ENCODE measurements at regions of chr2 and their contacts with region 1.

Region 1: DNA sequence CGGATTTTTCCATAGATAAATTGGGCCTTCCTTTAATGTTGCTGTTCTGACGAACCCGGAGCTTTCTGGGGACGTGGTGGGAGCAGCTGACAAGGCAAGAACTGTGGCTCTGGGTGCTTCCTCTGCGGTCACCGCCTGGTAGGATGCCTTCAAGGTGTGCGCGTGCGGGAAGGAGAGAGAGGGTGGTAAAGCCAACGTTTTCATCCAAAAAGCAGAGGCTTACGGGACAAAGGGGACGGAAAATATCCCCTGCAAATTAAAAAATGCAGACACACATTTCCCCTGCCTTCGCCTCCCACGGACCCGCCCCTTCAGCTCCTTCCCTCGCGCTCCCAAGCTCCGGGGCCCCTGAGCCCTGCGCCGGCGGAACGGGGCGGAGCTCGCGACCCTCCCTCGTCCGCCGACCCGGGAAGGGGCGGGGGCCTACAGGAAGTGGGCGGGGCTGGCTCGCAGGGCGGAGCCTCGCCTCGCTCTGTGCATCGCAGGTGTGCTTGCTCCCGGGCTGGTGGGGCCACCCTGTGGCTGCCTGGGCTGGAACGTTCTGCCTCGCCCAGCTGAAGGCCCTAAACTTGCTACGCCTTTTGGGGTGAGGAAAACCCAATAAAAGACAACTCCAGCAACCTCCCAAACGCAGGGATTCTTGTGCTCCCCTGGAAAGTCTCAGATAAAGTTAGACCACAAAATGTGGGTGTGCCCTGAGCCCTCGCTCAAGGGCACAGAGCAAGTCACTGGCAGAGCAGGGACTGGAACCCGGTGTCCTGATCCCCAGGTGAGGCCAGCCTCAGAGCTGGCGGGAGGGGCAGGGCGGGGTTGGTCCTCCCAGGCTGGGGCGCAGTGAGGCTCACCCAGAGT is 25.4 kb upstream of the SLC66A3 start:
- DNase-seq: peak; percentile 59 to 74
- ATAC-seq: peak; percentile 66 to 81
- H3K4me3 ChIP-seq: peak overlapping the region; percentile 45
- H3K27ac ChIP-seq: peak overlapping the region; percentile 67 to 77
- H3K4me1 ChIP-seq: peaks cover 16% of the 10 kb centered on the region; the same call in 2 of the 3 replicates
- CTCF ChIP-seq: peak; percentile 72
- EP300 ChIP-seq: no peak
- POLR2A ChIP-seq: no peak
- RAD21 ChIP-seq: peak; percentile 74 to 86

Region 2: GRCh38 chr2:10647886-10648605 is 481.8 kb before region 1 on chr2:
- CTCF ChIA-PET with region 1: no interaction called
- POLR2A ChIA-PET with region 1: no interaction called
- DNase-seq: no peak
- ATAC-seq: peak in 1 of 2 experiments; percentile 30; a peak in 2 of 6 replicates
- H3K4me3 ChIP-seq: no peak overlapping the region
- H3K27ac ChIP-seq: no peak overlapping the region
- H3K4me1 ChIP-seq: no peaks in the 10 kb centered on the region
- CTCF ChIP-seq: no peak
- EP300 ChIP-seq: no peak
- POLR2A ChIP-seq: no peak
- RAD21 ChIP-seq: no peak

Region 3: GRCh38 chr2:10844097-10844496 is 285.7 kb before region 1 on chr2:
- CTCF ChIA-PET with region 1: interaction called, 1,025 read pairs
- POLR2A ChIA-PET with region 1: no interaction called
- DNase-seq: peak in 1 of 2 experiments; percentile 52
- ATAC-seq: peak; percentile 70 to 93; a peak in 5 of 6 replicates
- H3K4me3 ChIP-seq: no peak overlapping the region
- H3K27ac ChIP-seq: no peak overlapping the region; a peak in 1 of 6 replicates
- H3K4me1 ChIP-seq: peaks cover 9% of the 10 kb centered on the region; the same call in 1 of the 3 replicates
- CTCF ChIP-seq: no peak
- EP300 ChIP-seq: no peak
- POLR2A ChIP-seq: no peak
- RAD21 ChIP-seq: no peak

Region 4: DNA sequence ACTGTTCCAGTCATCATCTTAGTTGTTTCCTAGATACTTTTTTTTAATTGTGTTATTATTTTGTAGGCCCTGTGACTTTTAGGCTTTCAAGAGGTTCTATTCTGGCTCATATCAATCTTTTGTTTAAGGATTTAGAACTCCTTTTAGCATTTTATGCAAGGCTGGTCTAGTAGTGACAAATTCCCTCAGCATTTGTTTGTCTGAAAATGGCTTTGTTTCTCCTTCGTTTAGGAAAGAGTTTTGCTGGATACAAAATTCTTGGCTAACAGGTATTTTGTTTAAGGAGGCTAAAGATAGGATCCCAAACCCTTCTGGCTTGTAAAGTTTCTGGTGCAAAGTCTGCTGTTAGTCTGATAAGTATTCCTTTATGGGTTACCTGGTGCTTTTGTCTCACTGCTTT is 91.2 kb before region 1 on chr2:
- CTCF ChIA-PET with region 1: no interaction called
- POLR2A ChIA-PET with region 1: no interaction called
- DNase-seq: no peak
- ATAC-seq: no peak
- H3K4me3 ChIP-seq: no peak overlapping the region
- H3K27ac ChIP-seq: no peak overlapping the region
- H3K4me1 ChIP-seq: no peaks in the 10 kb centered on the region
- CTCF ChIP-seq: no peak
- EP300 ChIP-seq: no peak
- POLR2A ChIP-seq: no peak
- RAD21 ChIP-seq: no peak

Region 5: DNA sequence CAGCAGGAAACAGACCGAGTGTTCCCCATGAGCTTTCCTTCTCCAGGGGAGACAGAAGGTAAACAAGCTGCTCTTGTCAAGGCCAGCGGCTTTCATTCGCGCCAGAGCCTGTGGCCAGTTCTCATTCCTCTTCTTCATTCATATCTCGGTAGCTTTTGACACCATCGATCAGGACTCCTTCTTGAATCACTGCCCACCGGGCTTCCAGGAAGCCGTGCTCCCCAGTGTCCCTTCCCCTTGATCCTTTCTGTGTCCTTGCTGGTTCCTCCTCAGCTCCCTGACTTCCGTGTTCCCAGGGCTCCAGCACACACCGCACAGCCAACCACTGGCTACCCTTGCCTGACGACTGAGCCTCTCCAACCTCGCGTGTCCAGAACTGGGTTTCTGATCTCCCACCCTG is 39.5 kb after region 1 on chr2:
- CTCF ChIA-PET with region 1: interaction called, 28 read pairs
- POLR2A ChIA-PET with region 1: no interaction called
- DNase-seq: no peak
- ATAC-seq: peak; percentile 43 to 67
- H3K4me3 ChIP-seq: no peak overlapping the region
- H3K27ac ChIP-seq: no peak overlapping the region
- H3K4me1 ChIP-seq: no peaks in the 10 kb centered on the region
- CTCF ChIP-seq: no peak
- EP300 ChIP-seq: no peak
- POLR2A ChIP-seq: no peak
- RAD21 ChIP-seq: no peak

Region 6: DNA sequence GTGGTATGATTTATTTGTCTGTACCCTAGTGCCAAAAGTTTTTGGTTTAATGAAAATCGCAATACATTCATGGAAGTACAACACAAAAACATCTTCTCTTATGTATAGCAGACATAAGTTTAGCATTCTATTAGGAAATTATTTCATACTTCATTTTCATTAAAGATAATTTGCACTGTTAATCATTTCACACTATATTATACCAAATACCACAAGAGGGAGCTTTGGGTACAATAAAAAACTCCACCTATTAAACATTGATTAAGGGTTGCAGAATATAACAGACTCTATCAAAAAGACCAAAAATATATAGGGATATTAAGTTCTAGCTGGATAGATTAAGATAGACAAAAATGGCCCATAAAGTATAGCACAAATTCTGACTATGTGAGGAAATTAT is 104.5 kb after region 1 on chr2:
- CTCF ChIA-PET with region 1: interaction called, 31 read pairs
- POLR2A ChIA-PET with region 1: no interaction called
- DNase-seq: no peak
- ATAC-seq: peak in 1 of 2 experiments; percentile 73; a peak in 2 of 6 replicates
- H3K4me3 ChIP-seq: no peak overlapping the region
- H3K27ac ChIP-seq: no peak overlapping the region
- H3K4me1 ChIP-seq: peaks cover 26% of the 10 kb centered on the region; the same call in 2 of the 3 replicates
- CTCF ChIP-seq: peak; percentile 82
- EP300 ChIP-seq: no peak
- POLR2A ChIP-seq: no peak
- RAD21 ChIP-seq: peak; percentile 80 to 91

Region 7: GRCh38 chr2:11411768-11412448 is 282.1 kb after region 1 on chr2:
- CTCF ChIA-PET with region 1: interaction called, 54 read pairs
- POLR2A ChIA-PET with region 1: interaction called, 5 read pairs
- DNase-seq: peak in 1 of 2 experiments; percentile 61
- ATAC-seq: peak; percentile 66 to 79; a peak in 4 of 6 replicates
- H3K4me3 ChIP-seq: peak overlapping the region; percentile 25; the same call in 2 of the 3 replicates
- H3K27ac ChIP-seq: peak overlapping the region; percentile 52 to 65
- H3K4me1 ChIP-seq: peaks cover 30% of the 10 kb centered on the region
- CTCF ChIP-seq: peak; percentile 96
- EP300 ChIP-seq: no peak
- POLR2A ChIP-seq: no peak
- RAD21 ChIP-seq: peak; percentile 96 to 97

Region 8: GRCh38 chr2:11465497-11466406 is 335.9 kb after region 1 on chr2 and contains the start of gene E2F6:
- CTCF ChIA-PET with region 1: interaction called, 14 read pairs
- POLR2A ChIA-PET with region 1: interaction called, 3 read pairs
- DNase-seq: peak; percentile 93 to 97
- ATAC-seq: peak; percentile 88 to 90
- H3K4me3 ChIP-seq: peak within 1 kb of the TSS; percentile 59
- H3K27ac ChIP-seq: peak within 1 kb of the TSS; percentile 91 to 98
- H3K4me1 ChIP-seq: peaks cover 36% of the 10 kb centered on the region
- CTCF ChIP-seq: no peak
- EP300 ChIP-seq: no peak
- POLR2A ChIP-seq: peak; percentile 72
- RAD21 ChIP-seq: no peak
- polyA plus RNA-seq, gene E2F6: 38.0 and 41.7 TPM in 2 replicates

Region 9: GRCh38 chr2:11681722-11682589 is 552.1 kb after region 1 on chr2:
- CTCF ChIA-PET with region 1: interaction called, 11 read pairs
- POLR2A ChIA-PET with region 1: no interaction called
- DNase-seq: peak; percentile 43 to 94
- ATAC-seq: peak; percentile 41 to 85; a peak in 3 of 6 replicates
- H3K4me3 ChIP-seq: no peak overlapping the region
- H3K27ac ChIP-seq: no peak overlapping the region
- H3K4me1 ChIP-seq: peaks cover 4% of the 10 kb centered on the region; the same call in 1 of the 3 replicates
- CTCF ChIP-seq: peak; percentile 80
- EP300 ChIP-seq: no peak
- POLR2A ChIP-seq: no peak
- RAD21 ChIP-seq: peak; percentile 70 to 81

Measured in A549 (cell line).